CD8-positive, alpha-beta T cell (primary cell): ENCODE measurements at regions of chr7 and their contacts with region 1.

Region 1: DNA sequence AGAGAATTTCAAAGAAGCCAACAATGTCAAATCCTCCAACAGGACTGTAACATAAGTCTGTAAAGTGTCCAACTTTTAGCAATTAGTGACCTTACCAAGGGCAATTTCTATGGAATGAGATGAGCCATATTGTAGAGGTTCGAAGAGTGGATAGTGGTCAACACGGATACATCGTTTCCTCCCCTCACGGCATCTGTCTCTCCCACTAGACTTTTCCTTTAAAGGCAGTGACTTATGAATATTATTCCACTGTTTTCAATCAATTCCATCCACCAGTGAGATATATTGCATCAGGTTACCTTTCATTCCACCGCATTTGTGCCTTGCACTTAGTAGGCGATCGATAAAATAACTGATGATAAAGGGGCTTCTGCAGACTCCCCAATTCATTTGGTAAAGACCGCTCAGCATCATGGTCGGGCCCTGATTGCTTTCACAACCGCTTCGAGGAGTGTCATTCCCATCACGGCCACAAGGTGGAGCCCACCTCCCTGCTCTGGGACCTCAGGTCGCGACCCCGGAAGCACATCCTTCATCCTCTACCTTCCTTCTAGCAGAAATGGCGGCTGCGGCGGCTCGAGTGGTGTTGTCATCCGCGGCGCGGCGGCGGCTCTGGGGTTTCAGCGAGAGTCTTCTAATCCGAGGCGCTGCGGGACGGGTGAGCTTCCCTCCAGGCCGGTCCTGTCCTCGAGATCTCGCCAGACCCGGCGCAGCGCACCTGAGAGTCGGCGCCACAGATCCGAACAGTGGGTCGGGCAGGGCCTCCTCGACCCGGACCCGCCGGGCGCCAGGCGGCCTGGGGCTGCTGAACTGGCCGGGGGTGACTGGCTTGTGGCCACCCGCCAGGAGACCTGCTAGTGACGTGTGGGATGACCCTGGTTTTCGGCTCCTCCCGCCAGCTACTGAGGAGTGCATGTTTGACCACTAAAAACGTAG is at the start of gene PMPCB:
- DNase-seq: peak; percentile 92 to 98 (median 97)
- ATAC-seq: peak; percentile 100
- H3K4me3 ChIP-seq: peak within 1 kb of the TSS; percentile 72 to 75
- H3K4me3 Mint-ChIP-seq: peak within 1 kb of the TSS; percentile 83
- H3K27ac ChIP-seq: peak within 1 kb of the TSS; percentile 76 to 92
- H3K27ac Mint-ChIP-seq: peak within 1 kb of the TSS; percentile 85
- H3K4me1 ChIP-seq: peaks cover 19% of the 10 kb centered on the region
- H3K4me1 Mint-ChIP-seq: peaks cover 43% of the 10 kb centered on the region
- H3K27me3 ChIP-seq: no peaks in the 10 kb centered on the region
- H3K27me3 Mint-ChIP-seq: no peaks in the 10 kb centered on the region
- CTCF ChIP-seq: peak; percentile 82
- total RNA-seq, gene PMPCB: 104 to 108 TPM

Region 2: GRCh38 chr7:103373866-103374643 is 76.9 kb after region 1 on chr7:
- CTCF ChIA-PET with region 1: no interaction called
- POLR2A ChIA-PET with region 1: no interaction called
- intact Hi-C with region 1: no loop called
- DNase-seq: no peak
- ATAC-seq: no peak
- H3K4me3 ChIP-seq: no peak overlapping the region
- H3K4me3 Mint-ChIP-seq: no peak overlapping the region
- H3K27ac ChIP-seq: no peak overlapping the region
- H3K27ac Mint-ChIP-seq: no peak overlapping the region
- H3K4me1 ChIP-seq: no peaks in the 10 kb centered on the region
- H3K4me1 Mint-ChIP-seq: no peaks in the 10 kb centered on the region
- H3K27me3 ChIP-seq: no peaks in the 10 kb centered on the region
- H3K27me3 Mint-ChIP-seq: peaks cover 4% of the 10 kb centered on the region
- CTCF ChIP-seq: no peak

Region 3: DNA sequence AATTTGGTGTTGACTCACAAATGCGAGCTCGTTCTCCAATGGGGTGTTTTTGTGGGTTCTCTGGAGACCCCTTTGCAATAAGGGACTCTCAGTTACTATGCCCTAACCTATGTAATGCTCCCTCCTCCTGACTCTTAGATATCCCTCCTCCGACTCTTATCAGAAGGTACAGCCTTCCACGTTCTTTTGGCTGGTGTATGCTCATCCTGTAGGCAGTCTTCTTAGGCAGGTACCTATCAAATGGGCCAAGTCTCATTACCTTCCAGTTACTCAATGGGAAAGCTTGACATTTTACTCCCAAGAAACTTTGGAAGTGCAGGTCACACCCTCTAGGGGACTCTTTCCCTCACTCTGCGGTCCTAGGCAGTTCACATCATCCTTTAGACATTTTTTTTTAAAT is 116.2 kb after region 1 on chr7:
- CTCF ChIA-PET with region 1: no interaction called
- POLR2A ChIA-PET with region 1: no interaction called
- intact Hi-C with region 1: loop called in 1 of 2 experiments (anchors 5 kb)
- DNase-seq: no peak
- ATAC-seq: no peak
- H3K4me3 ChIP-seq: no peak overlapping the region
- H3K4me3 Mint-ChIP-seq: no peak overlapping the region
- H3K27ac ChIP-seq: no peak overlapping the region
- H3K27ac Mint-ChIP-seq: no peak overlapping the region
- H3K4me1 ChIP-seq: no peaks in the 10 kb centered on the region
- H3K4me1 Mint-ChIP-seq: no peaks in the 10 kb centered on the region
- H3K27me3 ChIP-seq: no peaks in the 10 kb centered on the region
- H3K27me3 Mint-ChIP-seq: peaks cover 15% of the 10 kb centered on the region
- CTCF ChIP-seq: no peak

Region 4: GRCh38 chr7:103432712-103433111 is 135.5 kb after region 1 on chr7:
- CTCF ChIA-PET with region 1: no interaction called
- POLR2A ChIA-PET with region 1: no interaction called
- intact Hi-C with region 1: no loop called
- DNase-seq: no peak
- ATAC-seq: no peak
- H3K4me3 ChIP-seq: no peak overlapping the region
- H3K4me3 Mint-ChIP-seq: no peak overlapping the region
- H3K27ac ChIP-seq: no peak overlapping the region
- H3K27ac Mint-ChIP-seq: no peak overlapping the region
- H3K4me1 ChIP-seq: no peaks in the 10 kb centered on the region
- H3K4me1 Mint-ChIP-seq: no peaks in the 10 kb centered on the region
- H3K27me3 ChIP-seq: no peaks in the 10 kb centered on the region
- H3K27me3 Mint-ChIP-seq: peaks cover 19% of the 10 kb centered on the region
- CTCF ChIP-seq: no peak

Region 5: DNA sequence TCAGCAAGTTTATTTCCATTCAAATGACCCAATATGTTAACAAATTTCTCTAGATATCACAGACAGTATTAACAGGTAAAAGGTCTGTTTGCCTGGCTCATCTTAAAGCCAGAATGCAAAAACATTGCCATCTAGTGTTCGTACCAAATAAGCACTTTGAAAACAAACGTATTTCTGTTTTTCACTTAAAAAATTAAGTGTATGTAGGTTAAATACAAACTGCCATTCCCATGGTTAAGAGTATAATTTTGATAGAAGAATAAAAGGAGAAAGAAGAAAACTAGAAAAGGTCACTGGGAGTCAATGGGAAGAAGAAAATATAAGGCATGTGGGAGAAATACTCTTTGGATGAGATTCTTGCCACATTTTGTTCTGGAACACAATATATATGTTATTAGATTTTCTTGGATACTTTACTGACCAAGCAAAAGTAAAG is 859.7 kb after region 1 on chr7:
- CTCF ChIA-PET with region 1: no interaction called
- POLR2A ChIA-PET with region 1: no interaction called
- intact Hi-C with region 1: loop called in 1 of 2 experiments (anchors 5 kb)
- DNase-seq: peak in 2 of 9 experiments; percentile 8 to 13
- ATAC-seq: no peak
- H3K4me3 ChIP-seq: no peak overlapping the region
- H3K4me3 Mint-ChIP-seq: no peak overlapping the region
- H3K27ac ChIP-seq: no peak overlapping the region
- H3K27ac Mint-ChIP-seq: no peak overlapping the region
- H3K4me1 ChIP-seq: no peaks in the 10 kb centered on the region
- H3K4me1 Mint-ChIP-seq: peaks cover 2% of the 10 kb centered on the region
- H3K27me3 ChIP-seq: no peaks in the 10 kb centered on the region
- H3K27me3 Mint-ChIP-seq: no peaks in the 10 kb centered on the region
- CTCF ChIP-seq: no peak

Region 6: GRCh38 chr7:104207731-104208420 is 910.7 kb after region 1 on chr7 and contains the start of gene ORC5:
- CTCF ChIA-PET with region 1: no interaction called
- POLR2A ChIA-PET with region 1: no interaction called
- intact Hi-C with region 1: loop called (anchors 5 kb)
- DNase-seq: peak; percentile 41 to 90 (median 73)
- ATAC-seq: peak; percentile 95
- H3K4me3 ChIP-seq: peak within 1 kb of the TSS; percentile 85 to 87
- H3K4me3 Mint-ChIP-seq: peak within 1 kb of the TSS; percentile 92
- H3K27ac ChIP-seq: peak within 1 kb of the TSS; percentile 75 to 91
- H3K27ac Mint-ChIP-seq: peak within 1 kb of the TSS; percentile 95
- H3K4me1 ChIP-seq: peaks cover 17% of the 10 kb centered on the region
- H3K4me1 Mint-ChIP-seq: peaks cover 49% of the 10 kb centered on the region
- H3K27me3 ChIP-seq: no peaks in the 10 kb centered on the region
- H3K27me3 Mint-ChIP-seq: peaks cover 15% of the 10 kb centered on the region
- CTCF ChIP-seq: no peak
- total RNA-seq, gene ORC5: 9.7 to 11.3 TPM